ENCODE measurements at regions of chr9 and their contacts with region 1.

Region 1: GRCh38 chr9:70111042-70111602 is 67.5 kb downstream of the MAMDC2 start:
- DNase-seq: peak; percentile 83 to 91 (median 87)
- H3K4me3 ChIP-seq: no peak overlapping the region
- H3K27ac ChIP-seq: no peak overlapping the region
- H3K4me1 ChIP-seq: peaks cover 1% of the 10 kb centered on the region
- H3K27me3 ChIP-seq: no peaks in the 10 kb centered on the region
- CTCF ChIP-seq: peak; percentile 47 to 76 (median 68)
- EP300 ChIP-seq: no peak
- POLR2A ChIP-seq: no peak

Region 2: GRCh38 chr9:69965416-69966145 is 145.5 kb before region 1 on chr9:
- intact Hi-C with region 1: loop called in 2 of 4 experiments (anchors 2 to 5 kb)
- DNase-seq: no peak
- H3K4me3 ChIP-seq: no peak overlapping the region
- H3K27ac ChIP-seq: no peak overlapping the region
- H3K4me1 ChIP-seq: no peaks in the 10 kb centered on the region
- H3K27me3 ChIP-seq: no peaks in the 10 kb centered on the region
- CTCF ChIP-seq: no peak
- EP300 ChIP-seq: no peak
- POLR2A ChIP-seq: no peak